Activated naive CD4-positive, alpha-beta T cell treated with anti-CD3 and anti-CD28 coated beads for 36 hours (primary cell): ENCODE measurements at regions of chr18 and their contacts with region 1.

Region 1: GRCh38 chr18:11851146-11851805 is at the start of gene CHMP1B:
- DNase-seq: peak; percentile 98
- H3K4me3 Mint-ChIP-seq: peak within 1 kb of the TSS; percentile 100
- H3K27ac Mint-ChIP-seq: peak within 1 kb of the TSS; percentile 100
- H3K4me1 Mint-ChIP-seq: peaks cover 31% of the 10 kb centered on the region
- H3K27me3 Mint-ChIP-seq: no peaks in the 10 kb centered on the region
- total RNA-seq, gene CHMP1B: 23.2 TPM

Region 2: GRCh38 chr18:10530852-10531251 is 1320.4 kb before region 1 on chr18:
- CTCF ChIA-PET with region 1: no interaction called
- intact Hi-C with region 1: loop called (anchors 2 kb)
- DNase-seq: peak; percentile 62
- H3K4me3 Mint-ChIP-seq: peak overlapping the region; percentile 11
- H3K27ac Mint-ChIP-seq: peak overlapping the region; percentile 87
- H3K4me1 Mint-ChIP-seq: peaks cover 37% of the 10 kb centered on the region
- H3K27me3 Mint-ChIP-seq: no peaks in the 10 kb centered on the region

Region 3: GRCh38 chr18:11883153-11883552 is 31.9 kb after region 1 on chr18:
- CTCF ChIA-PET with region 1: no interaction called
- intact Hi-C with region 1: no loop called
- DNase-seq: no peak
- H3K4me3 Mint-ChIP-seq: no peak overlapping the region
- H3K27ac Mint-ChIP-seq: no peak overlapping the region
- H3K4me1 Mint-ChIP-seq: no peaks in the 10 kb centered on the region
- H3K27me3 Mint-ChIP-seq: no peaks in the 10 kb centered on the region

Region 4: GRCh38 chr18:11908182-11909060 is 57.1 kb after region 1 on chr18 and contains the start of gene MPPE1:
- CTCF ChIA-PET with region 1: interaction called, 3 read pairs
- intact Hi-C with region 1: loop called (anchors 1 kb)
- DNase-seq: peak; percentile 89
- H3K4me3 Mint-ChIP-seq: peak within 1 kb of the TSS; percentile 89
- H3K27ac Mint-ChIP-seq: peak within 1 kb of the TSS; percentile 93
- H3K4me1 Mint-ChIP-seq: peaks cover 24% of the 10 kb centered on the region
- H3K27me3 Mint-ChIP-seq: no peaks in the 10 kb centered on the region
- total RNA-seq, gene MPPE1: 30.4 to 34.3 TPM

Region 5: GRCh38 chr18:11925800-11926481 is 74.7 kb after region 1 on chr18:
- CTCF ChIA-PET with region 1: no interaction called
- intact Hi-C with region 1: no loop called
- DNase-seq: no peak
- H3K4me3 Mint-ChIP-seq: no peak overlapping the region
- H3K27ac Mint-ChIP-seq: no peak overlapping the region
- H3K4me1 Mint-ChIP-seq: no peaks in the 10 kb centered on the region
- H3K27me3 Mint-ChIP-seq: no peaks in the 10 kb centered on the region

Region 6: DNA sequence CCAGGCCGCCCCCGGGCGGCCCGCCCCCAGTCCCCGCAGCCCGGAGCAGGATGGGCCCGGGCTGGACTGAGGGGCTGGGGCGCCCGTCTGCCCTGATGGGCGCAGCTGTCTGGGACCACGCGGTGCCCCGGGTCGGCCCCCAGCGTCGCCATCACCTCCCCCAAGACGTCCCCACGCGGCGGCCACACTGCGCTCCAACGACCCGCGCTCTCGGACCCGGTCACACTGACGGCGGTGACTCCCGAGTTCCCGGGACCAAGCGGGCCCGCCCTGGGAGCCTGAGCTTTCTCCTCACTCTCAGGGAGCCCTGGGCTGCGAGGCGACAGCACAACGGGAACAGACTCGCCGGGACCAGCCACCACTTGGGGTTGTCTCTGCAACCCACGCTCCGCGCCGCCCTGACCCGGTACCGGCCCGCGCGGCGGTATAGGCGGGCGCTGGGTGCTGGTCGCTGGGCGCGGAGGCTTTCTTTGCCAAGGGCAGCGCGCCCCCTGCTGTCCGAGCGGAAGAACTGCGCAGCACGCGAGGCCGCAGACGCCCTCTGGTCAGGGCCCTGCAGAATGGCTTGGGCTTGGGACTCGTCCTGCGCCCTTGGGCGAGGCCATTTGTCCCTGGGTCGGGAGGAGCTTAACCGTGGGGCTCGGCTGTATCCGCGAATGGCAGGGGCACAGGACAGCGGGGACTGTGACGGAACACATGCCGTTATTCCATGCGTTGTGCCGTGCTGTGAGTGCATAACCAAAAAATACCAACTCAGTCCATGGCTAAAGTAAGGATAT is 187.6 kb after region 1 on chr18:
- CTCF ChIA-PET with region 1: interaction called, 3 read pairs
- intact Hi-C with region 1: loop called (anchors 2 kb)
- DNase-seq: peak; percentile 76
- H3K4me3 Mint-ChIP-seq: peak overlapping the region; percentile 48
- H3K27ac Mint-ChIP-seq: no peak overlapping the region
- H3K4me1 Mint-ChIP-seq: peaks cover 10% of the 10 kb centered on the region
- H3K27me3 Mint-ChIP-seq: peaks cover 5% of the 10 kb centered on the region